ENCODE measurements at regions of chr12 and their contacts with region 1.

Region 1: DNA sequence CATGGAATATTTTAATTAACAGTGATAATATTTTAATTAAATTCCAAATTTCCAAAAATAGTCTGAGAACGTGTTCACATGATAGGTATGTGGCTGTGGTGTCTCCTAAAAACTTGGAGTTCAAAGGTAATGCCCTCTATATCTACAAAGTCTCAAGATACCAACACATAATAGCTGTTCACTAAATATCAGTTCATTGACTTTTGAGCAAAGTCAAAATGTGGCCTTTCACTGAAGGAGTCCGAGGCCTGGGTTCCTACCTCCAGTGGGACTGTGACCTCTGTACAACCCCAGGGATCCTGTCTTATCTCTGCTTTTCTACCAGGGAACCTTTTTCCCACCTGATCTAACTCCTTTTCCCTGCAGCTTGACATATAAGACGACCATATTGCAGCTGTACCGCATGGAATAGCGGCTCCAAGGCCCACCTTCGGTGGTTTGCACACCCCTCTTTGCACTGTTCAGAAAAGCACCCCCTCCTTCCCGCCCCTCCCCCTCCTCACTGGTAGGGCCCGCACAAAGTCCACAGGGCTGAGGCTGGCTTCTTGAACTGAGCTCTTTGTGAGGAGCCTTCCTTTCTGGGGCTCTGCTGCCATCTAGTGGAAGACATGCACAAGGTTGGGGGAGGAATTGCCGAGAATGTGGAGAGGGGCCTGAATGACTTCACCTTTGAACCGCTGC is 3.1 kb downstream of the CCND2 start:
- DNase-seq: peak; percentile 93
- ATAC-seq: peak; percentile 39
- H3K4me3 Mint-ChIP-seq: peak overlapping the region; percentile 95
- H3K27ac Mint-ChIP-seq: peak overlapping the region; percentile 99
- H3K4me1 Mint-ChIP-seq: peaks cover 62% of the 10 kb centered on the region
- H3K27me3 Mint-ChIP-seq: no peaks in the 10 kb centered on the region

Region 2: GRCh38 chr12:3973978-3974644 is 302.6 kb before region 1 on chr12:
- CTCF ChIA-PET with region 1: interaction called, 5 read pairs
- POLR2A ChIA-PET with region 1: interaction called, 3 read pairs
- intact Hi-C with region 1: loop called in 1 of 2 experiments (anchors 1 kb)
- DNase-seq: peak; percentile 40
- ATAC-seq: peak; percentile 69
- H3K4me3 Mint-ChIP-seq: peak overlapping the region; percentile 25
- H3K27ac Mint-ChIP-seq: peak overlapping the region; percentile 76
- H3K4me1 Mint-ChIP-seq: peaks cover 66% of the 10 kb centered on the region
- H3K27me3 Mint-ChIP-seq: no peaks in the 10 kb centered on the region

Region 3: GRCh38 chr12:4037747-4038312 is 238.8 kb before region 1 on chr12:
- CTCF ChIA-PET with region 1: interaction called, 19 read pairs
- POLR2A ChIA-PET with region 1: interaction called, 3 read pairs
- intact Hi-C with region 1: no loop called
- DNase-seq: peak; percentile 35
- ATAC-seq: no peak
- H3K4me3 Mint-ChIP-seq: no peak overlapping the region
- H3K27ac Mint-ChIP-seq: no peak overlapping the region
- H3K4me1 Mint-ChIP-seq: peaks cover 5% of the 10 kb centered on the region
- H3K27me3 Mint-ChIP-seq: no peaks in the 10 kb centered on the region

Region 4: GRCh38 chr12:4141348-4142270 is 135.1 kb before region 1 on chr12:
- CTCF ChIA-PET with region 1: interaction called, 33 read pairs
- POLR2A ChIA-PET with region 1: interaction called, 22 read pairs
- intact Hi-C with region 1: loop called in 1 of 2 experiments (anchors 1 kb)
- DNase-seq: no peak
- ATAC-seq: peak; percentile 25
- H3K4me3 Mint-ChIP-seq: no peak overlapping the region
- H3K27ac Mint-ChIP-seq: peak overlapping the region; percentile 91
- H3K4me1 Mint-ChIP-seq: peaks cover 84% of the 10 kb centered on the region
- H3K27me3 Mint-ChIP-seq: no peaks in the 10 kb centered on the region

Region 5: GRCh38 chr12:4251216-4251891 is 25.3 kb before region 1 on chr12:
- CTCF ChIA-PET with region 1: interaction called, 14 read pairs
- POLR2A ChIA-PET with region 1: no interaction called
- intact Hi-C with region 1: loop called (anchors 1 to 2 kb)
- DNase-seq: peak; percentile 60
- ATAC-seq: peak; percentile 96
- H3K4me3 Mint-ChIP-seq: peak overlapping the region; percentile 1
- H3K27ac Mint-ChIP-seq: peak overlapping the region; percentile 78
- H3K4me1 Mint-ChIP-seq: peaks cover 17% of the 10 kb centered on the region
- H3K27me3 Mint-ChIP-seq: peaks cover 4% of the 10 kb centered on the region

Region 6: DNA sequence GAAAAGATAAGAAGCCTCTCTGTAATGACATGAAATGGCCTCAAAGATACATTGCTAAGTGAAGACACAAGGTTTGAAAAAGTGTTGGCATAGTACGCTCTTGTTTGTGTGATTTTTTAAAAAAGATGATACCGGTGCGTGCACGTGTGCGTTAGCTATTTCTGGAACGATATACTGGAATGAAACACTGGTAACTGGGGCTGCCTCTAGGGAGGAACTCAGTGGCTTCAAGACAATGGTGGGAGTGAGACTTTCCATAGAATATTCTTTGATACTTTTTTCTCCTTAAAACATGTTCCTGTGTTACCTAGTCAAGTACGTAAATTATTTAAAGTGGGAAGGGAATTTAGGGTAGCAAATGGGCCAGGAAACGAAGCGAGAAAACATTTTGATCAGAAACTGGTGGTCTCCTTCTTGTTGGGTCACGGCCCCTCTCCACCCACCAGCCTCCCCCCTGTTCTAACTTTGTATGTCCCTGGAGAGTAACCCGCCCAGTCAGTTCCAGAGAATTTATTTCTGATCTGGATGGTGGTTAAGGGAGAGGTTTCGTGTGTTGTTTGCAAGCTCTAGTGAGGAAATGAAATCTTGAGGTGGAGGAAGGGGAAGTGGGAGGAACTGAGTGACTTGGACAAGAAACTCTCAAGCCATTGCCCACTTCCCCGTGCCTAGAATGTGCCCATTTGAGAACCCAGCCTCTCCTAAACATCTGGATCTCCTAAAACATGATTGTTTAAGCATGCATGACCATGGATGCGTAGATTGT is 162.4 kb after region 1 on chr12:
- CTCF ChIA-PET with region 1: no interaction called
- POLR2A ChIA-PET with region 1: no interaction called
- intact Hi-C with region 1: no loop called
- DNase-seq: no peak
- ATAC-seq: no peak
- H3K4me3 Mint-ChIP-seq: no peak overlapping the region
- H3K27ac Mint-ChIP-seq: no peak overlapping the region
- H3K4me1 Mint-ChIP-seq: peaks cover 8% of the 10 kb centered on the region
- H3K27me3 Mint-ChIP-seq: no peaks in the 10 kb centered on the region

Measured in activated CD4-positive, alpha-beta T cell treated with anti-CD3 and anti-CD28 coated beads for 36 hours (primary cell).